T-cell (primary cell): ENCODE measurements at regions of chr11 and their contacts with region 1.

Region 1: GRCh38 chr11:36095716-36096115 is 151.9 kb downstream of the LDLRAD3 start:
- DNase-seq: no peak
- ATAC-seq: no peak
- H3K4me3 ChIP-seq: no peak overlapping the region
- H3K4me3 Mint-ChIP-seq: no peak overlapping the region
- H3K27ac ChIP-seq: no peak overlapping the region
- H3K27ac Mint-ChIP-seq: no peak overlapping the region
- H3K4me1 ChIP-seq: no peaks in the 10 kb centered on the region
- H3K4me1 Mint-ChIP-seq: no peaks in the 10 kb centered on the region
- H3K27me3 ChIP-seq: peaks cover 0 to 13% of the 10 kb centered on the region in 2 experiments
- H3K27me3 Mint-ChIP-seq: peaks cover 25 to 30% of the 10 kb centered on the region in 2 donors

Region 2: GRCh38 chr11:35822815-35823495 is 272.8 kb before region 1 on chr11:
- CTCF ChIA-PET with region 1: interaction called in 1 of 2 experiments, 12 read pairs
- POLR2A ChIA-PET with region 1: no interaction called
- DNase-seq: no peak
- ATAC-seq: no peak
- H3K4me3 ChIP-seq: no peak overlapping the region
- H3K4me3 Mint-ChIP-seq: no peak overlapping the region
- H3K27ac ChIP-seq: no peak overlapping the region
- H3K27ac Mint-ChIP-seq: no peak overlapping the region
- H3K4me1 ChIP-seq: peaks cover 0 to 8% of the 10 kb centered on the region in 2 experiments
- H3K4me1 Mint-ChIP-seq: peaks cover 7 to 20% (median 19%) of the 10 kb centered on the region in 3 donors
- H3K27me3 ChIP-seq: peaks cover 0 to 5% of the 10 kb centered on the region in 2 experiments
- H3K27me3 Mint-ChIP-seq: no peaks in the 10 kb centered on the region